ENCODE measurements at regions of chr7 and their contacts with region 1.

Region 1: DNA sequence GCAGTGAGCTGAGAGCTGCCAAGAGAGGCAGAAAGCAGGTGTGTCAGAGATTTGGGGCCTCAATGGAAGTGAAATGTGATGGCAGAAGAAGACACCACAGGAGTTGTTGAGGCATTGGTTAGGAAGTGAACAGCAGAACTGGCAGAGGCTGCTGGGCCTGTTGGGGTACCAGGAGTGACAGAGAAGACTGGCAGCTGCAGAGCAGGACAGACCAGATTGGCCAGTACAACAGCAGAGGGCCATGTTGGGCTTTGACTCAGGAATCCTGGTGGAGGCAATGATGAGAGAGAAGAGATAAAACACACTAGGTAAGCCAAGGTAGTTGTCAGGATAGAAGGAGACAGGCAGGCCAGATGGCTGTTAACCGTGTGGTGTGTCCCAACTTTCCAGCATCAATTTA is 19.9 kb upstream of the HERPUD2 start:
- DNase-seq: no peak
- H3K4me3 Mint-ChIP-seq: no peak overlapping the region
- H3K27ac Mint-ChIP-seq: no peak overlapping the region
- H3K4me1 Mint-ChIP-seq: peaks cover 10% of the 10 kb centered on the region
- H3K27me3 Mint-ChIP-seq: peaks cover 30% of the 10 kb centered on the region

Region 2: GRCh38 chr7:35725280-35725680 is 10.4 kb after region 1 on chr7:
- CTCF ChIA-PET with region 1: interaction called, 36 read pairs
- DNase-seq: peak; percentile 79
- H3K4me3 Mint-ChIP-seq: peak overlapping the region; percentile 9
- H3K27ac Mint-ChIP-seq: peak overlapping the region; percentile 86
- H3K4me1 Mint-ChIP-seq: peaks cover 56% of the 10 kb centered on the region
- H3K27me3 Mint-ChIP-seq: peaks cover 1% of the 10 kb centered on the region

Region 3: GRCh38 chr7:35906191-35906908 is 191.5 kb after region 1 on chr7:
- CTCF ChIA-PET with region 1: interaction called, 26 read pairs
- DNase-seq: peak; percentile 77
- H3K4me3 Mint-ChIP-seq: no peak overlapping the region
- H3K27ac Mint-ChIP-seq: no peak overlapping the region
- H3K4me1 Mint-ChIP-seq: no peaks in the 10 kb centered on the region
- H3K27me3 Mint-ChIP-seq: no peaks in the 10 kb centered on the region

Measured in activated naive CD4-positive, alpha-beta T cell treated with anti-CD3 and anti-CD28 coated beads, Interleukin-2, amount 10 ng/mL, durations not matched to agents 7 days and 5 days (primary cell).